ENCODE measurements at regions of chr22 and their contacts with region 1.

Region 1: DNA sequence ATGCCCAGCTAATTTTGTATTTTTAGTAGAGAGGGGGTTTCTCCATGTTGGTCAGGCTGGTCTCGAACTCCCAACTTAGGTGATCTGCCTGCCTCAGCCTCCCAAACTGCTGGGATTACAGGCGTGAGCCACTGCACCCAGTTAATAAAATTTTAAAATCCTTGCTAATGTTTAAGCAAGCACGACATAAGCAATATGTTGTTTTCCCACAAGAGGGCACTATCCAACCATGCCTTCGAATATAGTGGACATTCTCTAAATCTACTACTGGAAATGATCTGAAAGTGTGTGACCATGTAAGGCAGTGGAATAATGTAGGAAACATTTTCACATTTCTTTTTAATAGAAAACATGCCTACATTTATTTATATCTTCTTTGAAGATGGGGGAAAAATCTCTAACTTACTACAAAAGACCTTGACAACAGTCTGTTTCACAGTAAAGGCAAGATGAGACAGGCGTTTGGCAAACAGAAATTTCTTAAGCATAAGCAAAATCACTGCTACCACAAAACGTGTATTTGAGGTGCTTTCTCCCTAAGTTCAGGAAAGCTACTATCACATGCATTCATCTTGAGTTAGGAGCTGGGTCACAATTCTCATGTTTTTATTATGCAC is 38.2 kb downstream of the PITPNB start:
- DNase-seq: no peak
- ATAC-seq: peak; percentile 81 to 85
- H3K4me3 ChIP-seq: no peak overlapping the region
- H3K27ac ChIP-seq: peak overlapping the region; percentile 26 to 43 (median 38)
- H3K4me1 ChIP-seq: peaks cover 17 to 30% of the 10 kb centered on the region in 2 donors
- H3K27me3 ChIP-seq: no peaks in the 10 kb centered on the region
- CTCF ChIP-seq: peak; percentile 76 to 85 (median 83)
- POLR2A ChIP-seq: no peak

Region 2: GRCh38 chr22:26756675-26757293 is 1124.1 kb before region 1 on chr22:
- in situ Hi-C with region 1: no loop called
- intact Hi-C with region 1: loop called (anchors 10 kb)
- DNase-seq: no peak
- ATAC-seq: peak; percentile 33 to 70
- H3K4me3 ChIP-seq: peak overlapping the region in 1 of 4 donors; percentile 32
- H3K27ac ChIP-seq: no peak overlapping the region
- H3K4me1 ChIP-seq: peaks cover 0 to 3% of the 10 kb centered on the region in 2 donors
- H3K27me3 ChIP-seq: no peaks in the 10 kb centered on the region
- CTCF ChIP-seq: peak; percentile 79 to 95 (median 88)
- POLR2A ChIP-seq: no peak